Activated naive CD4-positive, alpha-beta T cell treated with anti-CD3 and anti-CD28 coated beads for 36 hours (primary cell): ENCODE measurements at regions of chr20 and their contacts with region 1.

Region 1: DNA sequence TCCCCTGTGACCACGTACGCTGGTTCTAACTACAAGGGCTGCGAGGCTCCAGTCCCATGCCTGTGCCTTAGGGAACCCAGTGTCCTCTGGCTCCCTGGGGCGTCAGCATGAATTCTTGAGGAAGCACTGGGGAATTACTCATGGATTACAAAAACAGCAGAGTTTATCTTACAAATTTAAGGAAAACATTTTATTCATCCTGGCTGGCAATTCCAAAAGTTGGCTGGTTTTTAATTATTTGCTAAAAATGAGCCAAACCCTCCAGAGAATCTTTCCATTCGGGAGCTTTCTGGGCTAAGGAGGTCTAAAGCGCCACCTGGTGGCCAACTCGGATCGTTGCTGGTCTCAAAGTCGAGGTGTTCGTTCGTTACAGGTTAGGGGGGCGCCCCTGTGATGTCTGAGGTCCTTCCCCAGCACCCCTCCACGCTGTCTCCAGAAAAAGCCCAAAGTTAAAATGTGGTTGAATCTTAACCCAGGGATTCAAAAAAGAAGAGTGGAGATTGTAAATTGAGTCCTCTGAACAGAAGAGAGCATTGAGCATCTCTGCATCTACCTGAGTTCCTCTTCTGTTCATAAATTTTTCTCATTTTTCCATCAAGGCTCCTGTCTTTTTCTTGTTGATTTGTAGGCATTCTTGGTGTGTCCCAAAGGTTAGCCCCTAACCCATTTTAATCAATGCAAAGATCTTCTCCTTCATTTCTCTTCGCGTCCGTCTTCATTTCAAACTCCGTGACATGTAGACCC is 99.4 kb downstream of the BFSP1 start:
- DNase-seq: peak; percentile 63
- H3K4me3 Mint-ChIP-seq: no peak overlapping the region
- H3K27ac Mint-ChIP-seq: no peak overlapping the region
- H3K4me1 Mint-ChIP-seq: no peaks in the 10 kb centered on the region
- H3K27me3 Mint-ChIP-seq: peaks cover 20% of the 10 kb centered on the region

Region 2: GRCh38 chr20:15842872-15843271 is 1588.9 kb before region 1 on chr20:
- CTCF ChIA-PET with region 1: no interaction called
- intact Hi-C with region 1: no loop called
- DNase-seq: no peak
- H3K4me3 Mint-ChIP-seq: no peak overlapping the region
- H3K27ac Mint-ChIP-seq: no peak overlapping the region
- H3K4me1 Mint-ChIP-seq: no peaks in the 10 kb centered on the region
- H3K27me3 Mint-ChIP-seq: no peaks in the 10 kb centered on the region

Region 3: GRCh38 chr20:16801919-16802911 is 629.6 kb before region 1 on chr20:
- CTCF ChIA-PET with region 1: interaction called, 31 read pairs
- intact Hi-C with region 1: loop called (anchors 1 kb)
- DNase-seq: peak; percentile 78
- H3K4me3 Mint-ChIP-seq: no peak overlapping the region
- H3K27ac Mint-ChIP-seq: no peak overlapping the region
- H3K4me1 Mint-ChIP-seq: no peaks in the 10 kb centered on the region
- H3K27me3 Mint-ChIP-seq: peaks cover 46% of the 10 kb centered on the region

Region 4: DNA sequence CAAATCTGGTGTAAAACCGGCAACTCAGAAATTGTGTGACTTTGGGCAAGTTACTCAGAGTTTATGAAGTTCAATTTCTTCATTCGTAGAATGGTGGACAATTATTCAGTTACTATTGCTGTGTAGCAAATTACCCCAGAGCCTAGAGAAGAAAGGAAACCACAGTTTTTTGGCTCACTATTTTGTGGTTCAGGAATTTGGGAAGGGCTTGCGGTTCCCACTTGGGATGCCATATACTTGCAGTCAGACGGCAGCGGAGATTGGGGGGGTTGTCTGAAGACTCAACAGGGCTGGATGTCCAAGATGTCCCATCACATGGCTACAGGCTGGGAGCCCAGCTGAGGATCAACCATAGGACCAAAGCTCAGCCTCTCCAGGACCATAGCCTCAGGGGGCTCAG is 96.9 kb before region 1 on chr20:
- CTCF ChIA-PET with region 1: no interaction called
- intact Hi-C with region 1: no loop called
- DNase-seq: no peak
- H3K4me3 Mint-ChIP-seq: no peak overlapping the region
- H3K27ac Mint-ChIP-seq: no peak overlapping the region
- H3K4me1 Mint-ChIP-seq: no peaks in the 10 kb centered on the region
- H3K27me3 Mint-ChIP-seq: no peaks in the 10 kb centered on the region

Region 5: DNA sequence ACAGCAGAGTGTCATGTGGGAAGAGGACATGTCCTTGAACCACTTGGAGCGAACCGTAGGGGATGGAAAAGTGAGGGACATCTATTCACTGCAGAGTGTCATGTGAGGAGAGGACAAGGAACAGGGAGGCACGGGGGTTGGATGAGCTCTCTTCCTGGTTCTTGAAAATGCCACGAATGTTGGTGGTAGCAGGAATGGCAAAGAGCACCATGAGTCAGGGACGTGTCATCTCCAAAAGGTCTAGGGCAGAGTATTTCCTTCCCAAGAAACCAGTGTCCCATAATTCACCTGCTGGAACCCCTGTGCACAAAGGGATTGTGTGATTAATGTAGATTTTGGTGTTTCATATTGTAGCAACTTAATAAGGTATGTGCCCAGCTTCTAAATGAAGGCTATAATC is 37.4 kb before region 1 on chr20:
- CTCF ChIA-PET with region 1: no interaction called
- intact Hi-C with region 1: no loop called
- DNase-seq: no peak
- H3K4me3 Mint-ChIP-seq: no peak overlapping the region
- H3K27ac Mint-ChIP-seq: no peak overlapping the region
- H3K4me1 Mint-ChIP-seq: no peaks in the 10 kb centered on the region
- H3K27me3 Mint-ChIP-seq: peaks cover 8% of the 10 kb centered on the region

Region 6: DNA sequence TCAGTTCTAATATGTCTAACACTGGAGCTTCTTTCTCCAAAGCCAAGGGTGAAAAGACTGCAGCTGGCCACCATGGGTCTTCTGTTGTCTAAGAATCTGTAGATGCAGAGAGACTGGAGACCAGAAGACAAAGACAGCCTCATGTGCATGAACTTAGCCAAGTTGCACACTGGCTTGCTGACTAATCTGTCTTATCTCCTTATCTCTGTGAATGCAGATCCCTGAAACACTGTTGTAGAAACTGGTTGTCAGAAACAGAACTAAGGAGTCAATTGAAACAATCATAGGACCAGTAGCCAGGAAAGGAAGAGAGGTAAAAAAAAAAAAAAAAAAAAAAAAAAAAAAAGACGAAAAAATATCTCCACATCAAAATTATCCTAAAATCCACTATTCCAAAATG is 10.3 kb before region 1 on chr20:
- CTCF ChIA-PET with region 1: interaction called, 15 read pairs
- intact Hi-C with region 1: no loop called
- DNase-seq: no peak
- H3K4me3 Mint-ChIP-seq: no peak overlapping the region
- H3K27ac Mint-ChIP-seq: no peak overlapping the region
- H3K4me1 Mint-ChIP-seq: no peaks in the 10 kb centered on the region
- H3K27me3 Mint-ChIP-seq: peaks cover 7% of the 10 kb centered on the region